Sigmoid colon (tissue), 7 donors: ENCODE measurements at regions of chr1 and their contacts with region 1.

Region 1: DNA sequence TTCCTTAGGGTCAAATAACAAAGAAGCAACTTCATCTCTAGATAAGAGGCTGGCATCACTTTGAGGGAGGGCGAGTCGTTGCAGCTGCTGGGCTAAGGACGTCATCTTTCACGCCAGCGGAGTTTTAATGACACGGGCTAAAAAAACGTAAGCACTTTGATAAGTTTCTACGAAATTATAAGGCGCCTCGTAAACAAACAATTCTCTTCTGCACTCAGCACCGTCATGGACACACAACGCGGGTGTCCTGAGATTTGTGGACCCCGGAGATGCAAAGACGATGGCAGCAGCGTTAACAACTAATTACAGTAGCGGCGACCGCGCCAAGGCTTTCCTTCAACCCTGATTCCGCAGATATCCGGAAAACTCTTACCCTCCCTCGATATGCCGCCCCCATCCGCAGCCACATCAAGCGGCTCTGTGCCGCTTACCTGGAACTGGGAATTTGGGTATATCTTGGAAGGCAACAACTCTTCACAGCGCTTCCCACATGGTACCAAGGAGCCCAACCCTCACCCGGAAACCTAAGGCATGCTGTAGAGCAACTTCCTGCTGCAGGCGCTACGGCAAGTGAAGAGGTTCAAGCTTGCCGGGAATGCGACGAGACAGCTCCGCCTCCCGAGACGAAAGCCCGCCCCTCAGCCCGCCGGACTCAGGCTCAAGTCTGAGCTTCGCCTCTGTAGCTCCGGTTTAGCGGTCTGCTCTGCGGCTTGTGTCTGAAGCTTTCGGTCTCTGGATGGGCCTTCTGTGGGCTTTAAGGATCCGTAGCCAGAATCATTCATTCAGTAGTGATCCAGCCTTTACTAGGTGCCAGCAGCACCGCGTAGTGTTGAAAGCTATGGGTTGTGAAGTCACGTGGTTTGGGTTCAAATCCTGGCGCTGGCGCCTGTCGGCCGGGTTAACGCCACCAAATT is at the start of gene HEATR1:
- DNase-seq: peak; percentile 97
- H3K4me3 ChIP-seq: peak within 1 kb of the TSS; percentile 72 to 87 (median 86)
- H3K27ac ChIP-seq: peak within 1 kb of the TSS; percentile 87 to 90 (median 88)
- H3K4me1 ChIP-seq: peaks cover 0 to 22% (median 15%) of the 10 kb centered on the region in 4 donors
- H3K27me3 ChIP-seq: no peaks in the 10 kb centered on the region
- CTCF ChIP-seq: no peak
- EP300 ChIP-seq: peak in 2 of 4 donors; percentile 12 to 54
- POLR2A ChIP-seq: peak in 1 of 2 donors; percentile 17
- total RNA-seq, gene HEATR1: 14.4 to 22.1 (median 19.2) TPM

Region 2: DNA sequence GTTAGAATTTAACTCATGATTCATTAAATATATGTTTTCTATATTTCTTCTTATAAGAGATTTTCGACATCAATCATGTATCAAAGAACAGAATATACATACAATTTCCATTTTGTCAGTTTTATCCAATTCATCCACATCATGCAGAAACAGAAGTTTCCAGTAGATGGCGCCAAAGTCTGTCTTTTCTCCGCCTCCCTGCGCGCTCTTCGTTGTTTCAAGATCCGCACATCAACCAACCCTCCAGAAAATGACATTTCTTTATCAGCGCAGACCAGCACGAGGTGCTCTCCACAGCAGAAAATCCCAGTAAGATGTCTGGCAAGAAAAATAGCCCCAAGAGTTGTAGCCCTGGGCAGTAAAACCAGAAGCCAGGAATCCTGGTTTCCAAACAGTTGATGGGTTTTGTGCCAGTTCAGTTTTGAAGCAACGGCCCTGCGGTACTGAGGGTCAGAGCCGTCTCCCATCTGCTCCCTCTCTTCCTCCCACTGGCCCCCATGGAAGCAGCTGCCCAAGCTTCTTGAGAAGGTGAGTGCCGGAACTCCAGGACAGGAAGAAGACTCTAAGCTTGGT is 500.5 kb before region 1 on chr1:
- intact Hi-C with region 1: loop called (anchors 10 kb)
- DNase-seq: no peak
- H3K4me3 ChIP-seq: no peak overlapping the region
- H3K27ac ChIP-seq: no peak overlapping the region
- H3K4me1 ChIP-seq: peaks cover 0 to 3% (median 0%) of the 10 kb centered on the region in 4 donors
- H3K27me3 ChIP-seq: no peaks in the 10 kb centered on the region
- CTCF ChIP-seq: peak; percentile 58 to 90 (median 67)
- EP300 ChIP-seq: no peak
- POLR2A ChIP-seq: no peak

Region 3: DNA sequence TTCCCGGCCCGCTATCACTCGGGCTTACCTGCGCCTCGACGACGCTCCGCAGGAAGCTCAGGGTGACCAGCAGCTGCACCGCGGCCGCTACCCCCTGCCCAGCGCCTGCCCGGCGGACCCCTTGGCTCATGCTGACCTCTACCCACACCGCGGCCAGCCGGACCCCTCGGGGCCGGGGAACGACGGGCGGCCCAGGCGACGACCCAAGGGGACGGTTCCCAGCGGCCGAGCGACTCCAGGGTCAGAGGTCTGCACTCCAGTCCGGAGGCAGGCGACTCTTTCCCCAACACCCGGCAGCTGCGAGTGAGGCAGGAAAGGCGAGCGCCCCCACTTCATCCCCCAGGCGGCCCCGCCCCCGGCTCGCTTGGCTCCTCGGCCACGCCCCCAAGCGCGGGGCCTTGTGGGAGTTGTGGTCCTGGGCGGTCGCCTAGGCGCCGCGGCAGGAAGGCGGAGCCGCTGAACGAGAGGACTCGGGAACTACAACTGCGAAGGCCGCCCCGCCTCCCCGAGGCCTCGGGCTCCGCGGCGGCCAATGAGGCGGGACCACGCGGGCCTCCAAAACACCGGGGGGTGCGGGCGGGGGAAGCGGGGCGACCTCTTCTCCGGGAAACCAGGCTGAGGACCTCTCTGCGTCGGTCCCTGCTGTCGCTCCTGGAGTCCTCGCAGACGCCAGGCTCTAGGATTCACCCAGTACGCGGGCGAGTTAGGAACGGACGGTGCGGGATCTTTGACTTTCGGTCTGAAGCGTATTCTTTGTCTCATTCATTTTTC is 322.4 kb before region 1 on chr1 and contains the start of gene ERO1B:
- intact Hi-C with region 1: loop called (anchors 5 kb)
- DNase-seq: peak; percentile 98
- H3K4me3 ChIP-seq: peak within 1 kb of the TSS; percentile 82 to 98 (median 94)
- H3K27ac ChIP-seq: peak within 1 kb of the TSS; percentile 87 to 92 (median 90)
- H3K4me1 ChIP-seq: peaks cover 0 to 16% (median 11%) of the 10 kb centered on the region in 4 donors
- H3K27me3 ChIP-seq: no peaks in the 10 kb centered on the region
- CTCF ChIP-seq: no peak
- EP300 ChIP-seq: peak in 1 of 4 donors; percentile 21
- POLR2A ChIP-seq: peak; percentile 80 to 91
- total RNA-seq, gene ERO1B: 9.0 to 17.2 (median 13.7) TPM

Region 4: GRCh38 chr1:236354330-236355147 is 249.7 kb before region 1 on chr1:
- intact Hi-C with region 1: no loop called
- DNase-seq: no peak
- H3K4me3 ChIP-seq: no peak overlapping the region
- H3K27ac ChIP-seq: no peak overlapping the region
- H3K4me1 ChIP-seq: no peaks in the 10 kb centered on the region
- H3K27me3 ChIP-seq: no peaks in the 10 kb centered on the region
- CTCF ChIP-seq: no peak
- EP300 ChIP-seq: no peak
- POLR2A ChIP-seq: no peak

Region 5: DNA sequence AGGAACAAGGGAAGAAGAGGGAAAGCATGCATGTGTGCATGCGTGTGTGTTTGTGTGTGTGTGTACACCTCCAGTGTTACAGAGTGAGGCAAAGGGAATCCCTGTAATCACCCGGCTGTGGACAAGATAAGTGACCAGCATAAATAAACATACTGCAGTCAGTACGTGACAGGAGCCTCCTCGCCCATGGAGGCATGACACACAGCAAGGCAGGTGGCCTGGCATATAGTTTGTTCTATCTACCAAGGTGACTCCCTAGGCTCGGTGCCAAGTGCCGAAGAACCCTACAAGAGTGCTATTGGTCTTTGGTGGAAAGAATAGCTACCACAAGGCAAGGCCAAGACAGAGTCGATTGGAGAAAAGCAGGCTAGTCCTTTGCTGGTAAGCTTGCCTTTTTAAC is 31.8 kb after region 1 on chr1:
- intact Hi-C with region 1: no loop called
- DNase-seq: no peak
- H3K4me3 ChIP-seq: no peak overlapping the region
- H3K27ac ChIP-seq: no peak overlapping the region
- H3K4me1 ChIP-seq: no peaks in the 10 kb centered on the region
- H3K27me3 ChIP-seq: no peaks in the 10 kb centered on the region
- CTCF ChIP-seq: no peak
- EP300 ChIP-seq: no peak
- POLR2A ChIP-seq: no peak

Region 6: GRCh38 chr1:236795035-236795756 is 190.9 kb after region 1 on chr1 and contains the start of gene MTR:
- intact Hi-C with region 1: loop called (anchors 1 kb)
- DNase-seq: peak; percentile 99
- H3K4me3 ChIP-seq: peak within 1 kb of the TSS; percentile 62 to 97 (median 73)
- H3K27ac ChIP-seq: peak within 1 kb of the TSS; percentile 88 to 97 (median 92)
- H3K4me1 ChIP-seq: peaks cover 0 to 34% (median 27%) of the 10 kb centered on the region in 4 donors
- H3K27me3 ChIP-seq: no peaks in the 10 kb centered on the region
- CTCF ChIP-seq: no peak
- EP300 ChIP-seq: no peak
- POLR2A ChIP-seq: peak; percentile 71 to 83
- total RNA-seq, gene MTR: 28.2 to 38.4 (median 30.7) TPM

Region 7: DNA sequence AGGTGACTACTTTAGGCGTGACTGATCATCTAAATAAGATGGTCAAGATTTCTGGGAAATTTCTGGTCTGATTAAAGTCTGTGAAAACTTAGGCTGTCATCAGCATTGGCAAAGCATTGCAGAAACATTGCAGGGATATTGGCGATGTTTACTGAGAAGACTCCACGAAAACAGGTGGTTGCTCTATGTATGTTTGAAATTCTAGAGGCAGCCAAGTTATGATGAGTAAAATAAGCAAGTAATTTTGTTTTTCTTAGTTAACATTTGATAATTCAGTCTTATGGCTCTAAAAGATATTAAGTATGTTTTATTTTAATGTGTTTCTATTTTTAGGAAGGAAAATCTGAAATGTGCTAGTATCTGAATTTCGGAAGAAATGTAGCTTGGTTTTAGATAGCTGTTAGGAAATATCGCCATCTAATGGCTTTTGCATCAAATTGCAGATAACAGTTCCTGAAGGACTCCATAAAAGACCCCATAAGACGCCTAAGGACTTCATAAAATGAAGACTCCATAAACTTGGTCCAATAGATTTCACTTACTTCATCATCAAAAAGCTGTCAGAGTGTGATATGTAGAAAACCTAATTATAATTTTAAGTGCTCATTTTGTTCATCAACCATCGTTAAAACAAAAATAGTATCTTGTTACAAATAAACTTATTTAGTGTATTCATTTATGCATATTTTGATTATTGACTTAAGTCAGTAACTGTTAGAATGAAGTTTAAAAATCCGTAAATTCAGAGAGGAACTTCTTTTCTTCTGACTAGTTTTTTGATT is 782.3 kb after region 1 on chr1:
- intact Hi-C with region 1: loop called (anchors 5 kb)
- DNase-seq: no peak
- H3K4me3 ChIP-seq: no peak overlapping the region
- H3K27ac ChIP-seq: no peak overlapping the region
- H3K4me1 ChIP-seq: peaks cover 0 to 10% (median 4%) of the 10 kb centered on the region in 4 donors
- H3K27me3 ChIP-seq: no peaks in the 10 kb centered on the region
- CTCF ChIP-seq: peak; percentile 16 to 74 (median 58)
- EP300 ChIP-seq: no peak
- POLR2A ChIP-seq: no peak

Region 8: DNA sequence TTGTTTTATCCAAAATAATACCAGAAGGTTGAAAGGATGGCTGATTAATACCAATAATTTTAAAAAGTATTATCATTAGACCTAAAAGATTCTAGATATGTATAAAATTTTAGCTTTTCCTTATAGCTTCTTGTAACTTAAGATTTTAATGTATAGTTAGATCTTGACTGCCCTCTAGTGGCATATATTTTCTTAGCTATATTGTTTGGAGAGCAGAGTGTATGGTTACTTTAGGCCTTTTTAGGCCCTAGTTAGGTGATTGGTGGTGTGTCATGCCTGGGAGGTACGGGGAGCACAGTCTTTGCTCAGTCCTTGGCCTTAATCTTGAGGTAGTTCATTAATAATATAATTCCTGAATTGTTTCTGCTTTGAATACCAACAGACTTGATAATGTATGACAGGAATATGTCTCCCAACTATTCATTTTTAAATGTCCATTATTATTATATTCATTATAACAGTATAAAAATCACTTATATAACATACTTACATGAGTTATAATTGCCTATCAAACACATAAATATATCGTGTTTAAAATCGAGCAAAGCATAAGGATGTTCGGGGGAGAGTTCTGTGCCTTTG is 958.1 kb after region 1 on chr1:
- intact Hi-C with region 1: loop called (anchors 10 kb)
- DNase-seq: no peak
- H3K4me3 ChIP-seq: no peak overlapping the region
- H3K27ac ChIP-seq: no peak overlapping the region
- H3K4me1 ChIP-seq: no peaks in the 10 kb centered on the region
- H3K27me3 ChIP-seq: no peaks in the 10 kb centered on the region
- CTCF ChIP-seq: peak in 2 of 4 experiments; percentile 35 to 59
- EP300 ChIP-seq: no peak
- POLR2A ChIP-seq: no peak